Esophagus squamous epithelium (tissue), 5 donors: ENCODE measurements at regions of chr1 and their contacts with region 1.

Region 1: DNA sequence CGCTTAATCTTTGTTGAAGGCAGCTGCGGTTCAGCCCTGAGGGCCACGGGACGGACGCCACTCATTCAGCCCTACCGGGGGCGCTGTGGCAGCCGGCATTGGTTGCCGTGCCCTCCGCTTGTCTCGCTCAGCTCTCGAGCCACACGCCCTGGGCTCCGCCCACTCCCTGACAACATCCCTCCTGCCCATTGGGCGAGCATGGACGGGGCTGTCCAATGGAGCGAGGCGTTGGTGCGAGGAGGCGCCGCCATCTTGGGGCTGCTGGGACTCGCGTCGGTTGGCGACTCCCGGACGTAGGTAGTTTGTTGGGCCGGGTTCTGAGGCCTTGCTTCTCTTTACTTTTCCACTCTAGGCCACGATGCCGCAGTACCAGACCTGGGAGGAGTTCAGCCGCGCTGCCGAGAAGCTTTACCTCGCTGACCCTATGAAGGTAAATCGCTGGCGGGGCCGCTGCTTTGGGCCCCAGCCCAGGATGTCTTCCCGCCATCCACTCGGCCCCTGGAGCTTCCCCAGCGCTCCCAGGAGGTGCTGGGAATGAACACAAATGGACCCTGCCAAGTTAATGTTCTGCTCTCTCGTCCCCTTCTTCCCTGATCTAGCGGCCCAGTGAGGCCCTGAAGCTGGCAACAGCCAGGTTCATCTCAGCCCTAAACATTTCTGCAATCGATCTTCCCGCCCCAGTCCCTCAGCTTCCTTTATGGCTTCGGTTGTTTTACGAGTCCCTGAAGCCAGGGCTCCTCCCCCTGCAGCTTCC is at the start of gene SRP9:
- DNase-seq: peak; percentile 94
- H3K4me3 ChIP-seq: peak within 1 kb of the TSS; percentile 61 to 82 (median 70)
- H3K27ac ChIP-seq: peak within 1 kb of the TSS; percentile 92 to 97 (median 96)
- H3K4me1 ChIP-seq: peaks cover 14 to 65% (median 39%) of the 10 kb centered on the region in 3 donors
- H3K27me3 ChIP-seq: no peaks in the 10 kb centered on the region
- CTCF ChIP-seq: peak; percentile 75 to 92 (median 88)
- POLR2A ChIP-seq: peak in 2 of 4 donors; percentile 86 to 92
- total RNA-seq, gene SRP9: 115 to 229 (median 175) TPM

Region 2: GRCh38 chr1:225548140-225548857 is 229.5 kb before region 1 on chr1:
- intact Hi-C with region 1: no loop called
- DNase-seq: no peak
- H3K4me3 ChIP-seq: no peak overlapping the region
- H3K27ac ChIP-seq: no peak overlapping the region
- H3K4me1 ChIP-seq: peaks cover 0 to 9% (median 0%) of the 10 kb centered on the region in 3 donors
- H3K27me3 ChIP-seq: no peaks in the 10 kb centered on the region
- CTCF ChIP-seq: no peak
- POLR2A ChIP-seq: no peak

Region 3: DNA sequence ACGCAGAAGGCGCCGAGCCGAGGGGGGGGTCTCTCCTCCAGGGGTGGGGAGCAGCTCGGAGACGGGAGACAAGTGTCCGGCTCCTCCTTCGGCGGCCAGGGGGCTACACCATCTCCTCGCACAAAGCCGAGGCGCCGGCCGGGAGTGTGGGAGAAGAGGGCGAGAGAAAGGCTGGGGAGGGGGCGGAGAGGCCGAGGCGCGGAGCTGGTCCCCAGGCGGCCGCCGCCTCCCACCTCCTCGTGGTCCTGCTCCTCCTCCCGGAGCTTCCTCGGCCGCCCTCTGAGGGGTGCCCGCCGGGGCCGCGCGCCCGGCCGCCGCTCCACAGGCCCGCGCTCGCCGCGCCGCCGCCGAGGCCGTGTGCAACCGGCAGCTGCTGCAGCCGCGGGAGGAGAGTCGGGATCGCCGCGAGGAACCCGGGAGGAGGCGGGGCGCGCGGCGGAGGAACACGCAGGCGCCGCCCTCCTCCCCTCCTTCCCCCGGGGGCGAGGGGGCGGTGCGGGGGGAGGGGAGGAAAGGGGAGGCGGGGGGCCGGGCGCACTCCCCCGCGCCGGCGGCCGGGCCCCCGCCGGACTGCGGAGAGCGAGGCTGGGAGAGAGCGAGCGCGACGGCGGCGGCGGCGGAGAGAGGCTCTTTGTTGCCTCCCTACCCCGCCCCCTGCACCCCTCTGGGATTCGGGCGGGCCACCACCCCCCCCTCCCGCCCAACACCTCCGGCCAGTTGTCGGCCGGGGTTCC is 124.9 kb before region 1 on chr1 and contains the start of gene ENAH:
- intact Hi-C with region 1: loop called (anchors 10 kb)
- DNase-seq: no peak
- H3K4me3 ChIP-seq: peak within 1 kb of the TSS; percentile 92 to 97 (median 92)
- H3K27ac ChIP-seq: peak within 1 kb of the TSS; percentile 88 to 99 (median 94)
- H3K4me1 ChIP-seq: peaks cover 12 to 70% (median 20%) of the 10 kb centered on the region in 3 donors
- H3K27me3 ChIP-seq: peaks cover 0 to 11% (median 0%) of the 10 kb centered on the region in 4 donors
- CTCF ChIP-seq: no peak
- POLR2A ChIP-seq: peak in 2 of 4 donors; percentile 69 to 84
- total RNA-seq, gene ENAH: 8.6 to 42.5 (median 35.9) TPM

Region 4: DNA sequence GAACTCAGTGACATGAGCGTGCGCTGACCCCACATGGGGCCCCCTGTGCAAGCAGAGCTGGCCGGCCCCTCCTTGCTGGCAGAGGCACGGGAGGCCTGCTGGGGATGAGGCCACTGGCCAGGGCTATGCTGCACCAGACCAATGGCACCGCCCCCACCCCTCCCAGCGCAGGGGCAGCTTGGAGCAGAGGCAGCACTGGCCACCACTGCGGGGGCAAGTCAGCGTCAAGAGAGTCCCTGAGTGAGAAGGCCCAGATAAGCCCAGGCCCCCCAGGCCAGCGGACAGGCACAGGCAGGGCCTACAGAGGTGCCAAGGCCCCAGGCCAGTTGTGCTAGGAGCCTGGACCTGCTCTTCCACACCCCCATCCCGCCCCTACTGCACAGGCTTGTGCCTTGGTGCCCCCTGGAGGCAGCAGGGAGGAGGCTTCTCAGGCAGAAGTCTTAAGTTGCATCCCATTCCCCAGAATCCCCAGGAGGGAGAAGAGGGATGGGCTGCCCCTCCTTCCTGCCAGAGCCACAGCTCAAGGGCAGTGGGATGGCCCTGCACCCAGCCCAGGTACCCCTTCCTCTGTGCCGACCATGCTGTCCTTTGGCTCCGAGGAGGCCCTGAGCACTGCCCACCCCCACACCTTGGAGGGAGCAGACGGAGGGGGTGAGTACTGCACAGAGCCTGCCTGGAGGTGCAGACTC is 68.0 kb after region 1 on chr1:
- intact Hi-C with region 1: loop called (anchors 10 kb)
- DNase-seq: no peak
- H3K4me3 ChIP-seq: no peak overlapping the region
- H3K27ac ChIP-seq: peak overlapping the region in 3 of 4 donors; percentile 35 to 59 (median 54)
- H3K4me1 ChIP-seq: peaks cover 9 to 40% (median 10%) of the 10 kb centered on the region in 3 donors
- H3K27me3 ChIP-seq: no peaks in the 10 kb centered on the region
- CTCF ChIP-seq: peak; percentile 27 to 83 (median 70)
- POLR2A ChIP-seq: no peak

Region 5: DNA sequence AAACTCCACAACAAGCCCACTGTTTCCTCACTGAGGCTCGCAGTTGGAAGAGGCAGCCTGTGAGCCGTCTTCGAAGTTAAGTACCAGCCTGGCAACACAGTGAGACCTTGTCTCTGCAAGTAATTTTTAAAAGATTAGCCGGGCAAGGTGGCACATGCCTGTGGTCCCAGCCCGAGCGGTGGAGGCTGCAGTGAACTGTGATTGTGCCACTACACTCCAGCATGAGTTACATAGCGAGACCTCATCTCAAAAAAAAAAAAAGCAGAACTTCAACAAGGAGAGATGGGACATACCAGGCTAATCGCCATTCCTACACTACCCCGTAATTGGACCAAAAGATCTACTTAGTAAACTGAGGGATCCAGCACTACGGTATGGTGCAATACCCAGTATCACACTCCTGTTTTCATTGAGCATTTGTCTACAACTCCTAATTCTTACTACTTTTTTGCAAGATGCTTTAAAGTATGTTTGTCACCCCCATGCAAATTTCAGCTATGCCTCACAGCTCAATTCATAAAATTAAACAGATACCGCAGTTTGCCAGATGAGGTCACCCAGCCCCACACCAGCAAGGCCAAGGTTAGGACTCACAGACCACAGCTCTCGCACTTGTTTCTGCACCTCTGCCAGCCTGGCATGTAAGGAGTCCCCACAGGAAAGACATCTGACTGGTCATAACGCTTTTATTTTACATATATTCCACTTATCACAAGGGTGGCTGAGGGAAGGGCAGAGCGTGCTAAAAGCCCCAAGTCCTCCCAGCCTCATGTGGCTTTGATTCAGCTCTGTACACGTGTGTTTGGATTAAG is 200.4 kb after region 1 on chr1:
- intact Hi-C with region 1: loop called (anchors 10 kb)
- DNase-seq: no peak
- H3K4me3 ChIP-seq: no peak overlapping the region
- H3K27ac ChIP-seq: no peak overlapping the region
- H3K4me1 ChIP-seq: peaks cover 0 to 17% (median 5%) of the 10 kb centered on the region in 3 donors
- H3K27me3 ChIP-seq: no peaks in the 10 kb centered on the region
- CTCF ChIP-seq: no peak
- POLR2A ChIP-seq: no peak